Dendritic cell treated with granulocyte-macrophage colony-stimulating factor and Interleukin-4, amounts not matched to agents 40 ng/mL and 50 ng/mL, for 4 days (primary cell): ENCODE measurements at regions of chr5 and their contacts with region 1.

Region 1: GRCh38 chr5:131165119-131165727 is at the start of gene HINT1:
- H3K4me3 Mint-ChIP-seq: peak within 1 kb of the TSS; percentile 87
- H3K27ac Mint-ChIP-seq: peak within 1 kb of the TSS; percentile 94
- H3K4me1 Mint-ChIP-seq: peaks cover 28% of the 10 kb centered on the region
- H3K27me3 Mint-ChIP-seq: no peaks in the 10 kb centered on the region

Region 2: DNA sequence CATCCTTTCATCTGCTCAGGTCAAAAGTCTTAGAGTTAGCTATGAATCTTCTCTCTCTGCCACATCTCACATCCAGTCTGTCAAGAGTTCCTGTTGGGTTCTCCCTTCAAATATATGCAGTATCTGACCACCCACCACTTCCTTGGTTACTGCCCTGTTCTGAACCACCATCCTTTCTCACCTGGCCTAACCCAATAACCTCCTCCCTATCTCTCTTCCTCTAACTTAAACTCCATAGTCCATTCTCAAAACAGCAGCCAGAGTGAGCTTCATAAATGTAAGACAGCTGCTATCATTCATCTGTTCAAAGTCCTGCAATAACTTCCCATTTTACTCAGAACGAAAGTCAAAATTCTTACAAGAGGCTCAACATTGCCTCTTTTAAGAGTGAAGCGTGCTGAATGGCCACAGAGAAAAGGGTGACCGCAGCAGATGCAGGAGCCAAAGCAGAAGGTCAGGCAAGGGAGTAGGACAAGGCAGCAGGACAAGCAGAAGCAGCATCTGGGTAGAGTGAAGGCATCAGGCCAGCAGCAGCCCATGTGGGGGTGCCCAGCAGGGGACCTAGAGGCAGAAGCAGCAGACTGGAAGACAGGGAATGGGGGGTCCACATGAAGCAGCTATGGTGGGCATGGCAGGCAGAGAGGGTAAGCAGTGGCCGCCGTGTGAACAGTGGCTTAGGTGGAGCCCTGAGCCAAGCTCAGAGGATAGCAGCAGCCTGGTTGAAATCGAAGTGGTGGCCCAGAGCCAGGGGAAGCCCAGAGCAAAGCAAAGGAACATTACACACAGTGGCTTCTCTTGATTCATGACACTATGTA is 59.4 kb after region 1 on chr5:
- intact Hi-C with region 1: loop called (anchors 5 kb)
- H3K4me3 Mint-ChIP-seq: no peak overlapping the region
- H3K27ac Mint-ChIP-seq: no peak overlapping the region
- H3K4me1 Mint-ChIP-seq: peaks cover 16% of the 10 kb centered on the region
- H3K27me3 Mint-ChIP-seq: no peaks in the 10 kb centered on the region

Region 3: GRCh38 chr5:131263648-131264450 is 98.6 kb after region 1 on chr5 and contains the start of gene CDC42SE2:
- intact Hi-C with region 1: loop called (anchors 2 kb)
- H3K4me3 Mint-ChIP-seq: peak within 1 kb of the TSS; percentile 80
- H3K27ac Mint-ChIP-seq: peak within 1 kb of the TSS; percentile 87
- H3K4me1 Mint-ChIP-seq: peaks cover 35% of the 10 kb centered on the region
- H3K27me3 Mint-ChIP-seq: no peaks in the 10 kb centered on the region

Region 4: GRCh38 chr5:131303537-131303936 is 138.3 kb after region 1 on chr5:
- intact Hi-C with region 1: no loop called
- H3K4me3 Mint-ChIP-seq: no peak overlapping the region
- H3K27ac Mint-ChIP-seq: no peak overlapping the region
- H3K4me1 Mint-ChIP-seq: peaks cover 52% of the 10 kb centered on the region
- H3K27me3 Mint-ChIP-seq: no peaks in the 10 kb centered on the region

Region 5: GRCh38 chr5:131382407-131383395 is 217.5 kb after region 1 on chr5:
- intact Hi-C with region 1: loop called (anchors 5 kb)
- H3K4me3 Mint-ChIP-seq: no peak overlapping the region
- H3K27ac Mint-ChIP-seq: peak overlapping the region; percentile 86
- H3K4me1 Mint-ChIP-seq: peaks cover 34% of the 10 kb centered on the region
- H3K27me3 Mint-ChIP-seq: no peaks in the 10 kb centered on the region

Region 6: DNA sequence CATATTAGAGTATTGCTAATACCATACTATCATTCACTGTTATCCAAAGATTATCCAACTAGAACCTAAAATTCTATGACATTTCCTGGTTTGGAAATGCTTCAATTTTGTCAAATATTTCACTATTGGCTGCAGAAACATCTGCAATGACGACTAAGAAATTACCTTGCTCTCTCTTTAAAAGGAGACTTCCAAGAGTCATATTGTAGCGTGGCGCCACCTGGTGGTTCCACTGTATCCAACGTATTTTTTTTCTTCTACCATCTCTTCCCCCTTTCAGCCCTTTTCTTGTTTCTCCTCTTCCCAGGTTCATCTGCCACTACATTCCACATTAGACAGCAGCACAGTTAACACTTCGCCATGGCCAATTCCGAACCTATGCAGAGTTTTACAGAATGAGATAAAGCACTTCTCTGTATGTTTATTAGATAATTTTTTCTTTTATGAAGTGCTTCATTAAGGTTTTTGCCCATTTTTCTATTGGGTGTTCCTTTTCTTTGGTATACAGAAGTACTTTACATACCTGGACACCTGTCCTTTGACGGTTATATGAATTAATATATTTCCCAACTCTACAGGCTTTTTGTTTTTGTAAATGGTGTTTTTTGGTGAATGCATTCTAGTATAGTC is 252.1 kb after region 1 on chr5:
- intact Hi-C with region 1: loop called (anchors 2 kb)
- H3K4me3 Mint-ChIP-seq: no peak overlapping the region
- H3K27ac Mint-ChIP-seq: no peak overlapping the region
- H3K4me1 Mint-ChIP-seq: peaks cover 13% of the 10 kb centered on the region
- H3K27me3 Mint-ChIP-seq: no peaks in the 10 kb centered on the region

Region 7: GRCh38 chr5:131796793-131797693 is 631.8 kb after region 1 on chr5 and contains the start of gene FNIP1:
- intact Hi-C with region 1: loop called (anchors 10 kb)
- H3K4me3 Mint-ChIP-seq: peak within 1 kb of the TSS; percentile 96
- H3K27ac Mint-ChIP-seq: peak within 1 kb of the TSS; percentile 96
- H3K4me1 Mint-ChIP-seq: peaks cover 25% of the 10 kb centered on the region
- H3K27me3 Mint-ChIP-seq: no peaks in the 10 kb centered on the region